Prostate gland (tissue), 2 donors: ENCODE measurements at regions of chr7 and their contacts with region 1.

Region 1: DNA sequence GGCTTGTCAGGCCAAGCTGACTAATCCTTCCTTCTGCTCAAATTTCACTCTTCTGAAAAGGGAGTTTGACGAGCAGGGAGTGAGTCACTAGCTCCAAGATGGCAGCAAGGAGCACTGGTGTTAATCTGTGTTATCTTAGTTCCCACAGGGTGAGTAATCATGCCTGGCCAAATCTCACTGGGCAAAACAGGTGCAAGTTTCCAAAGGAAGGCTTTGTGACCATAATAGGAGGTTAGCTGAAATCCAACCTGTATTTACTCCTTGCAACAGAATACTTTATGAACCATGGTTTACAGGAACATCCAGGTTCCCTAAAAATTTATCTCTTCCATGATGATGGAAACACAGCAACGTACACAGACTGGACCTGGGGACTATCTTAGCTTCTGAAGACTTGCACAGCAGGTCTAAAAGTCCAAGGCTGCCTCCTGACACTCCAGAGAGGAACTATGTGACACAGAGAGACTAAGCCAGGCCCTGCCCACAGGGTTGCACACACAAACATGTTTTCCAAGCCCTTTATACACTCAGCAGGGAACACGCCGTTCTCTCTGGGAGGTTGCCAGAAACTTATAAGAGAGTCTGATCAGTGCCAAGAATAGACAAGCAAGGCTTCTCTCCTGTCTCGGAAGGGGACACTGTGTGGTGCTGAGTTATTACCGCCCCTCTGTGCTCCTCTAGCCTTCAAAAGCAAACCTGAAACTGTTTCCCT is 46.3 kb downstream of the PDK4 start:
- DNase-seq: peak; percentile 98
- H3K4me3 ChIP-seq: no peak overlapping the region
- H3K27ac ChIP-seq: peak overlapping the region; percentile 87 to 94
- H3K4me1 ChIP-seq: peaks cover 23% of the 10 kb centered on the region
- H3K27me3 ChIP-seq: no peaks in the 10 kb centered on the region
- CTCF ChIP-seq: peak in 1 of 4 experiments; percentile 4
- POLR2A ChIP-seq: peak; percentile 19

Region 2: DNA sequence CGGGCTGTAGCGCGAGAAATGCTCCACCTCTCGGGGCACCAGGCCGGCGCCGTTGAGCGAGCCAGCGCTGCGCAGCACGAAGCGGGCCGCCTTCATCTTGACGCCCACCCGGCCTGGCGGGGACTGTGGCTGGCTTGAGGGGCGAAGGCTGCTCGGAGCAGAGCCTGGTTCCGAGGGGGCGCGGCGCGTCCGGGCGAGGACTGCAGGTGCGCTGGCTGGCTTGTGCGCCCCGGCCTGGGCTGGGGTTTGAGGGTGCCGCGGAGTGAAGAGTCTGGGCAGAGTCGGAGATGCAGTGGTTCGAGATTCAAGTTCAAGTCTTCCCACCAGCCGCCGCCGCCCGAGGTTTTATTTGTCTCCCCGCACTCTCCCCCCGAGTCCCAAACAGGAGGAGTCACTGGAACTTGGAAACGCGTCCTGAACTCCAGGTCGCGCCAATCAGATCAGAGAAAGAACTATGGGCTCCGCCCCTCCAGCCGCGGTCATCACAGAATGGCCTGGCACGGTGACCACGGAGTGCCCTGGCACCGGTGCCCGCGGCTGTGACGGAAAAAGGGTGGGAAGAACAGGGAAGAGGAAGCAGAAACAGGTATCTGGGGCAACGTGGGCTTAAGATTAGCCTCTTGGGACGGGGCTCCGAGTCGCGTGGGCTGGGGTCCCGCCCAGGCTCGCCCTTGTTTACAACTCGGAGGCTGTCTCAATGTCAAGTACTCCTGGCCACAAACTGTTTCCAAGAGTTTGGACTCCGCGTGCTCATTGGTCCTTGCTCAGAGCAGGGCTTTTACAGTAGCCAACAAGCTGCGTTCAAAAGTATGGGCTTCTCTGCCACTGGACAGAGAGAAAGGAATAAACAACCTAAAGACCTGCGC is 46.5 kb after region 1 on chr7 and contains the start of gene PDK4:
- intact Hi-C with region 1: loop called (anchors 1 kb)
- DNase-seq: peak; percentile 97
- H3K4me3 ChIP-seq: peak within 1 kb of the TSS; percentile 69 to 78
- H3K27ac ChIP-seq: peak within 1 kb of the TSS; percentile 93 to 96
- H3K4me1 ChIP-seq: no peaks in the 10 kb centered on the region
- H3K27me3 ChIP-seq: no peaks in the 10 kb centered on the region
- CTCF ChIP-seq: no peak
- POLR2A ChIP-seq: peak; percentile 81
- total RNA-seq, gene PDK4: 61.3 to 65.5 TPM